ENCODE measurements at regions of chr7 and their contacts with region 1.

Region 1: GRCh38 chr7:11607686-11608085 is 224.3 kb downstream of the THSD7A start:
- DNase-seq: peak; percentile 14 to 37
- ATAC-seq: peak in 3 of 8 donors; percentile 25 to 48 (median 44)
- H3K4me3 ChIP-seq: no peak overlapping the region
- H3K27ac ChIP-seq: no peak overlapping the region
- H3K4me1 ChIP-seq: peaks cover 3 to 38% (median 15%) of the 10 kb centered on the region in 9 donors
- H3K27me3 ChIP-seq: no peaks in the 10 kb centered on the region
- CTCF ChIP-seq: no peak

Region 2: DNA sequence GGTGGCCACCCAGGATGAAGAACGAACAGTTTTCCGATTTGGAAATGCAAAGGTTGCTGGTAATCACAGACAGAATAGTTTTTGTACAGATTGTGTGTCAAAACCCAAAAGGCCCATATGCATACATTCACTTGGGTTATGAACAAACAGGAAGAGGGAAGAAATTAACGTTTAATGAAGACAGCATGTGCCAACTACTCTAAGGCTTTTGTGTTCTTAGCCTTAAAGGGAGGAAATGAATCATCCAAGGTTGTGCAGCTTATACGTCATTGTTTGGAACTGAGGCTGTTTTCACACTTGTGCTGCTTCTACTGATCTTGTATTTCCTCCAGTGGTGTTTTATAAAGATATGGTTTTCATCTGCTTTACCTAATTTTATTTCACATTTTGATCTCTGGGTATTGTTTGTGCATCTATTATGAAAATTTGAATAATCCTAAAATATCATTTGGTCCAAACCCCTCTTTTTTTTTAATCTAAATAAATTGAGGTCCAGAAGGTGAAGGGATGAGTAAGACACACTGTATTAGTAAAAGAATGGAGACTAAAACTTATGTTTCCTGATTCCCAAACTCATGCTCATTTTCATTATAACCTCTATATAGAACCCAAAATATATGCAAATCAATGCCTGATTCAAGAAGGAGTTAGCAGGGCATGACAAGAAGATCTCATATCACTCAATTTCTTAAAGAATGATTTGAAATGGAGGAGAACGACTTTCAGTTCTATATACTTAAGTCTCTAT is 148.8 kb before region 1 on chr7:
- intact Hi-C with region 1: loop called in 1 of 10 experiments (anchors 2 kb)
- DNase-seq: no peak
- ATAC-seq: peak in 6 of 8 donors; percentile 46 to 93 (median 82)
- H3K4me3 ChIP-seq: no peak overlapping the region
- H3K27ac ChIP-seq: peak overlapping the region in 4 of 10 donors; percentile 27 to 57 (median 41)
- H3K4me1 ChIP-seq: peaks cover 0 to 19% (median 5%) of the 10 kb centered on the region in 9 donors
- H3K27me3 ChIP-seq: no peaks in the 10 kb centered on the region
- CTCF ChIP-seq: no peak

Region 3: GRCh38 chr7:11524476-11525397 is 82.9 kb before region 1 on chr7:
- intact Hi-C with region 1: no loop called
- DNase-seq: no peak
- ATAC-seq: no peak
- H3K4me3 ChIP-seq: peak overlapping the region in 1 of 10 donors; percentile 2
- H3K27ac ChIP-seq: no peak overlapping the region
- H3K4me1 ChIP-seq: no peaks in the 10 kb centered on the region
- H3K27me3 ChIP-seq: no peaks in the 10 kb centered on the region
- CTCF ChIP-seq: no peak

Region 4: GRCh38 chr7:11648980-11649379 is 41.3 kb after region 1 on chr7:
- intact Hi-C with region 1: no loop called
- DNase-seq: peak in 1 of 2 donors; percentile 10
- ATAC-seq: peak in 7 of 8 donors; percentile 35 to 86 (median 58)
- H3K4me3 ChIP-seq: no peak overlapping the region
- H3K27ac ChIP-seq: no peak overlapping the region
- H3K4me1 ChIP-seq: peaks cover 0 to 16% (median 8%) of the 10 kb centered on the region in 9 donors
- H3K27me3 ChIP-seq: no peaks in the 10 kb centered on the region
- CTCF ChIP-seq: no peak

Region 5: GRCh38 chr7:11714205-11714604 is 106.5 kb after region 1 on chr7:
- intact Hi-C with region 1: no loop called
- DNase-seq: no peak
- ATAC-seq: no peak
- H3K4me3 ChIP-seq: no peak overlapping the region
- H3K27ac ChIP-seq: no peak overlapping the region
- H3K4me1 ChIP-seq: peaks cover 0 to 14% (median 0%) of the 10 kb centered on the region in 9 donors
- H3K27me3 ChIP-seq: no peaks in the 10 kb centered on the region
- CTCF ChIP-seq: no peak